ENCODE measurements at regions of chr3 and their contacts with region 1.

Region 1: GRCh38 chr3:50245831-50246516 is 10.0 kb downstream of the GNAI2 start:
- DNase-seq: peak; percentile 96
- H3K4me3 ChIP-seq: peak overlapping the region; percentile 43
- H3K27ac ChIP-seq: peak overlapping the region; percentile 69
- H3K4me1 ChIP-seq: peaks cover 14% of the 10 kb centered on the region
- H3K27me3 ChIP-seq: no peaks in the 10 kb centered on the region
- CTCF ChIP-seq: peak; percentile 98

Region 2: GRCh38 chr3:50227390-50228183 is 18.4 kb before region 1 on chr3:
- intact Hi-C with region 1: loop called (anchors 1 kb)
- DNase-seq: peak; percentile 95
- H3K4me3 ChIP-seq: peak overlapping the region; percentile 82
- H3K27ac ChIP-seq: peak overlapping the region; percentile 85
- H3K4me1 ChIP-seq: peaks cover 4% of the 10 kb centered on the region
- H3K27me3 ChIP-seq: no peaks in the 10 kb centered on the region
- CTCF ChIP-seq: peak; percentile 93